AG04449 (cell line): ENCODE measurements at regions of chr11 and their contacts with region 1.

Region 1: GRCh38 chr11:9109939-9110731 is 18.7 kb upstream of the SCUBE2 start:
- DNase-seq: no peak
- H3K4me3 ChIP-seq: no peak overlapping the region
- CTCF ChIP-seq: no peak

Region 2: DNA sequence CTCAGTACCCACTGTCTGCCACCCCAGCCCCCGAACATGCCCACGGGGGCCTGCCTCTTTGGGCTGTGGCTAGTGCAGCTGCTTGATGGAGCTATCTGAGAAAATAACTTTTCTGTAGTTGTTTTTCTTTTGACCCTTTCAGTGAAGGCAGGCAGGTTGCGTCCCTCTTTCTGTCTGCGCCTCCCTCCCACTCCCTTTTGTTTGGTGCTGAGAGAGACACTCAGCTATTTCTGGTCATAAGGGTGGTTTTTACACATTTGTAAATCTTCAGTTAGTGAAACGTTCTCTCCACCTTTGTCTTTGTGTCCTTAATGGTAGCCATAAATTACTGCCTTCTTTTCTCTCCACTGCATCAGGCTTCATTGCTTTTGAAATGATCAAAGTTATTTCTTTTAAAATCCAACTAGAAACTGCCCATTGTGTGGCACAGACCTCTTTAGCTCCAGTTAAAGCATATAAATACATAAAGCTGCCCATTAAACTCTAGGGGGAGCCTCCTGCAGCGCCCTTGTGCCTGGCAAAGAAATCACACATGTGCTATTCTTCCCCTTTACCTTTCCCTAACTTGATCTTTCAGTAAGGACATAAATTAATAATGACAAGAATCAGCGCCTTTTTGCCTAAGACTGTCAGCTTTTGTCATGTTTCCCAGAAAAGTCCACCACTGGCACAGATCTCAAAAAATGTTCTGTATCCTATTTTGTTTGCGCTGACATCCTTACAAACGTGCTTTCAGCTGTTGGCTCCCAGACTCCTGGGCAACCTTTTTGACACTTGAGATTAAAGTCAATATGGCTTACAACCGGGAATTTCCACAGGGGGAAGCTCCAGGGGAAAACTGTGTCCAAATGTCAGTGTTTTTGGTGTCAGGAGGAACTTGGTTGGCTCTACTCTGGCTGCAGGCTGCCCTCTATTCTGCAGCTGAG is 17.0 kb before region 1 on chr11:
- CTCF ChIA-PET with region 1: interaction called, 23 read pairs
- POLR2A ChIA-PET with region 1: no interaction called
- DNase-seq: no peak
- H3K4me3 ChIP-seq: no peak overlapping the region
- CTCF ChIP-seq: peak; percentile 24